CD4-positive, alpha-beta T cell (primary cell): ENCODE measurements at regions of chr6 and their contacts with region 1.

Region 1: GRCh38 chr6:89638320-89639195 is at the start of gene LYRM2:
- DNase-seq: peak; percentile 80 to 95 (median 86)
- ATAC-seq: peak; percentile 95
- H3K4me3 ChIP-seq: peak within 1 kb of the TSS; percentile 93
- H3K4me3 Mint-ChIP-seq: peak within 1 kb of the TSS; percentile 97
- H3K27ac ChIP-seq: peak within 1 kb of the TSS; percentile 92 to 99
- H3K27ac Mint-ChIP-seq: peak within 1 kb of the TSS; percentile 98
- H3K4me1 ChIP-seq: peaks cover 15% of the 10 kb centered on the region
- H3K4me1 Mint-ChIP-seq: peaks cover 35% of the 10 kb centered on the region
- H3K27me3 ChIP-seq: no peaks in the 10 kb centered on the region
- H3K27me3 Mint-ChIP-seq: no peaks in the 10 kb centered on the region
- CTCF ChIP-seq: no peak
- total RNA-seq, gene LYRM2: 12.3 to 16.3 TPM

Region 2: GRCh38 chr6:90586836-90587638 is 948.5 kb after region 1 on chr6 and contains the start of gene MAP3K7:
- CTCF ChIA-PET with region 1: no interaction called
- POLR2A ChIA-PET with region 1: no interaction called
- intact Hi-C with region 1: loop called in 1 of 2 experiments (anchors 2 kb)
- DNase-seq: peak; percentile 80 to 97 (median 92)
- ATAC-seq: peak; percentile 85
- H3K4me3 ChIP-seq: peak within 1 kb of the TSS; percentile 94
- H3K4me3 Mint-ChIP-seq: peak within 1 kb of the TSS; percentile 98
- H3K27ac ChIP-seq: peak within 1 kb of the TSS; percentile 97 to 99
- H3K27ac Mint-ChIP-seq: peak within 1 kb of the TSS; percentile 96
- H3K4me1 ChIP-seq: peaks cover 15% of the 10 kb centered on the region
- H3K4me1 Mint-ChIP-seq: peaks cover 50% of the 10 kb centered on the region
- H3K27me3 ChIP-seq: peaks cover 0 to 9% of the 10 kb centered on the region in 2 experiments
- H3K27me3 Mint-ChIP-seq: peaks cover 9% of the 10 kb centered on the region
- CTCF ChIP-seq: no peak
- total RNA-seq, gene MAP3K7: 9.0 to 9.3 TPM